Mucosa of descending colon (tissue), 3 donors: ENCODE measurements at regions of chr14 and their contacts with region 1.

Region 1: DNA sequence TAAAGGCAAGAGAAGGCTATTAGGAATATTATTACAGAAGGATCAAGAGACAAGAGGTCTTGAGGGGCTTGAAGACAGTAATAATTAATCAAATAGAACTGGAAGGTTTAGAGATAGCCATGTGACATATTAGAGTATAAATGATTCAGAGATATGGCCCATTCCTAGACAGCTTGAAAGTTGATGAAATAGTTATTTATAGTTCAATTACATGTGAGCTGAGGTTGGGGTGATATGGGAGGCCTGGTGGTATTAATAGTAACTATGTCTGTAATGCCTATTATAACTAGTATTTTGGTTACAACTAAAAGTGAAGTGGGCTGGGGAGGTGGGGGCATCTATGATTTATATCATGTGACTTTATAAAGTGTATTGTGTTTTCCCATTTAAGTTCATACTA is 14.1 kb upstream of the MIS18BP1 start:
- DNase-seq: no peak
- ATAC-seq: no peak
- H3K4me3 ChIP-seq: no peak overlapping the region
- H3K4me1 ChIP-seq: no peaks in the 10 kb centered on the region
- CTCF ChIP-seq: no peak

Region 2: DNA sequence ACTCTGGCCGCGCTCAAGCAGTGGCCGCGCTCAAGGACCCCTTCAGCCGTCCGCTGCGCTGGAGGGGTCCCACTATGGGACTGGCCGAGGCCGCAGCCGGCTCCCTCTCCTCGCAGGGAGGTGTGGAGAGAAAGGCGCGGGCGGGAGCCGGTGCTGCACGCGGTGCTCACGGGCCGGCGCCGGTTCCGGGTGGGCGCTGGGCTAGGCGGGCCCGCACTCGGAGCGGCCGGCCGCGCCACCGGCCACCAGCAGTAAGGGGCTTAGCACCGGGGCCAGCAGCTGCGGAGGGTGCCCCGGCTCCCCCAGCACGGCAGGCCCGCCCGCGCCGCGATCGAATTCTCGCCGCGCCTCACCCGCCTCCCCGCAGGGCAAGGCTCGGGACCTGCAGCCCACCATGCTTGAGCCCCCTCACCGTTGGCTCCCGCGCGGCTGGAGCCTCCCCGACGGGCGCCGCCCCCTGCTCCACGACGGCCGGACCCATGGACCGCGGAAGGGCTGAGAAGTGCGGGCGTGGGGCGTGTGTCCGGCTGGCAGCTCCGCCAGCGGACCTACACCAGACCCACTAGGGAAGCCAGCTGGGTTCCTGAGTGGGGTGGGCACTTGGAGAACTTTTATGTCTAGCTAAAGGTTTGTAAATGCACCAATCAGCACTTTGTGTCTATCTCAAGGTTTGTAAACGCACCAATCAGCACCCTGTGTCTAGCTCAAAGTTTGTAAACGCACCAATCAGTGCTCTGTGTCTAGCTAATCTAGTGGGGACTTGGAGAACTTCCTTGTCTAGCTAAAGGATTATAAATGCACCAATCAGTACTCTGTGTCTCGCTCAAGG is 354.8 kb before region 1 on chr14:
- intact Hi-C with region 1: loop called in 1 of 2 experiments (anchors 10 kb)
- DNase-seq: peak in 1 of 3 donors; percentile 24
- ATAC-seq: peak; percentile 29
- H3K4me3 ChIP-seq: no peak overlapping the region
- H3K4me1 ChIP-seq: no peaks in the 10 kb centered on the region
- CTCF ChIP-seq: no peak